Naive thymus-derived CD8-positive, alpha-beta T cell (primary cell): ENCODE measurements at regions of chr17 and their contacts with region 1.

Region 1: GRCh38 chr17:59619293-59620063 is at the start of gene CLTC:
- DNase-seq: peak; percentile 85 to 99 (median 89)
- ATAC-seq: peak; percentile 86
- H3K4me3 Mint-ChIP-seq: peak within 1 kb of the TSS; percentile 88 to 100 (median 98)
- H3K27ac Mint-ChIP-seq: peak within 1 kb of the TSS; percentile 96 to 99 (median 99)
- H3K4me1 Mint-ChIP-seq: peaks cover 17 to 59% (median 41%) of the 10 kb centered on the region in 4 donors
- H3K27me3 Mint-ChIP-seq: peaks cover 0 to 3% (median 0%) of the 10 kb centered on the region in 5 donors
- polyA plus RNA-seq, gene CLTC: 19.5 to 31.2 (median 23.7) TPM

Region 2: GRCh38 chr17:59521204-59522126 is 98.0 kb before region 1 on chr17:
- POLR2A ChIA-PET with region 1: no interaction called
- DNase-seq: peak; percentile 29 to 68 (median 50)
- ATAC-seq: peak; percentile 65 to 73
- H3K4me3 Mint-ChIP-seq: no peak overlapping the region
- H3K27ac Mint-ChIP-seq: no peak overlapping the region
- H3K4me1 Mint-ChIP-seq: peaks cover 0 to 7% (median 2%) of the 10 kb centered on the region in 4 donors
- H3K27me3 Mint-ChIP-seq: peaks cover 0 to 10% (median 7%) of the 10 kb centered on the region in 5 donors

Region 3: DNA sequence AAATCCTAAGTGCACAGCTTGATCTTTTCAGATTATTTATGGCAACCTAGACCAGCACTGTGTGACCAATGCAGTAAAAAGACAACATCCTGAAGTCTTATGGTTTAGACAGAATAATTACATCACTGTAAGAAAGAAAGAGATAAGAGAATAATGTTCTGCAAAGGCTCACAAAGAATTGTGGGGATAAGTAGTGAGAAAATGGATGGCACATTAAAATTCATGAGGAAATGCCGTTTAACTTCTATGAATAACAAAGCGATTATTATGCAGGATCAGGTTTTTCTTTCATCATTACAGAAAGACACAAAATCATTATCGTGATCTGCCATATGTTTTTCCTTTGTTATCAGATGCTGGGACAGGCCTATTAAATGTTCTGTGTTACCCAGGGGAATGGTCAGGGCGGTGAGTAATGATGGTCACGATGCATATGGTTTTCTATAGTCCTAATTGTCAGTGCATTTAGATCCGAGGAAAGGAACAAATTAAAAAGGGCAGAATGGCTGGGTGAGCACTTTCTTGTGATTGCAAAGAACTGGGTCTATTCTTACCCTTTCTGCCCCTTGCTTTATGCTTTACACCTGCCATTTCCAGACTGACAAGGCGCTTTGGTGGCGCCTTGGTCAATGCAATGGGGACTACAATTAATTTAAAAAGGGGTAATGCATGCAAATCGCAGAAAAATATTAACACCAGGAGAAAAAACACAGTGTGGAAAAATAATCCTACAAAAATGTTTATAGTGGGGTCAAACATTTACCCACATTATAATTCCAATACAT is 72.2 kb before region 1 on chr17:
- POLR2A ChIA-PET with region 1: no interaction called
- DNase-seq: no peak
- ATAC-seq: no peak
- H3K4me3 Mint-ChIP-seq: no peak overlapping the region
- H3K27ac Mint-ChIP-seq: peak overlapping the region in 1 of 10 donors; percentile 26
- H3K4me1 Mint-ChIP-seq: peaks cover 0 to 3% (median 0%) of the 10 kb centered on the region in 4 donors
- H3K27me3 Mint-ChIP-seq: peaks cover 0 to 15% (median 8%) of the 10 kb centered on the region in 5 donors

Region 4: GRCh38 chr17:59565171-59565969 is 54.1 kb before region 1 on chr17 and contains the start of gene DHX40:
- POLR2A ChIA-PET with region 1: interaction called, 29 read pairs
- DNase-seq: peak; percentile 87 to 97 (median 94)
- ATAC-seq: peak; percentile 84 to 87
- H3K4me3 Mint-ChIP-seq: peak within 1 kb of the TSS; percentile 97 to 100 (median 100)
- H3K27ac Mint-ChIP-seq: peak within 1 kb of the TSS; percentile 98 to 100 (median 100)
- H3K4me1 Mint-ChIP-seq: peaks cover 12 to 28% (median 24%) of the 10 kb centered on the region in 4 donors
- H3K27me3 Mint-ChIP-seq: no peaks in the 10 kb centered on the region
- polyA plus RNA-seq, gene DHX40: 23.6 to 25.9 (median 24.0) TPM

Region 5: GRCh38 chr17:59634632-59635541 is 15.4 kb after region 1 on chr17:
- POLR2A ChIA-PET with region 1: interaction called, 16 read pairs
- DNase-seq: no peak
- ATAC-seq: no peak
- H3K4me3 Mint-ChIP-seq: peak overlapping the region in 3 of 10 donors; percentile 18 to 38 (median 24)
- H3K27ac Mint-ChIP-seq: peak overlapping the region in 7 of 10 donors; percentile 38 to 62 (median 56)
- H3K4me1 Mint-ChIP-seq: peaks cover 18 to 77% (median 62%) of the 10 kb centered on the region in 4 donors
- H3K27me3 Mint-ChIP-seq: no peaks in the 10 kb centered on the region

Region 6: DNA sequence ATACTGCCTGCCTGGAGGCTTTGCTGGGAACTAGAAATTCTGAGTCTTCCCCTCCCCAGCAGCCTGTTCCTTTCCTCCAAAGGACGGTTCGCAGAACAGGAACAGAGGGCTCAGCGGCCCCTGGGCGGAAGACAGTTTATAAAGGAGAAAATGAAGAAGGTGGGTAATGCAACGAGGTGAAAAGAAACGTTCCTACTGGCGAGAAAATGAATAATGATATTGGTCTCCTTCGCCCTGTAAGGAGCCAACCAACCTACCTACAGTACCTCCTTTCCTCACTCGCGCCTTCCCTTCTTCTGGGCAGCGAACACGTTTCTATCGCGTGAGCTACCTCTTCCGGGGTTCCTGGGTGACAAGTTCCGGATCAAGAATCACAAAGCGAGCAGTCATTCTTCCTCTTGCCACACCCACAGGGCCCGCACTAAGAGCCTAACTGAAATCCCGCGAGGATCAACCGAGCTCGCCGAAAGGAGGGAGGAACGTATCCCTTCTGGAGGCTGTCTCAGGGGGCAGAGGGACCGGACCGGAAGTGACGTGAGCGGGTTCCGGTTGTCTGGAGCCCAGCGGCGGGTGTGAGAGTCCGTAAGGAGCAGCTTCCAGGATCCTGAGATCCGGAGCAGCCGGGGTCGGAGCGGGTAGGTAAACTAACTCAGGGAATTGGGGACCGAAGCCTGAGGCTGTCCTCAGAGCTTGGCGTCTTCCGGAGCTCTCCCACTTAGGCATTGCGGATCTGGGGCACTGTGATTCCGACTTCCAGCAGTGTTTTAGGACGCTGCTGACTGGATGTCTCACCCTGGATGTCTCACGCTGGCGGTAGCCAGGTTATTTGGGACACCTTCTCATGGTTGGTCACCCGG is 87.9 kb after region 1 on chr17 and contains the starts of genes PTRH2 and VMP1:
- POLR2A ChIA-PET with region 1: interaction called, 14 read pairs
- DNase-seq: peak; percentile 77 to 93 (median 88)
- ATAC-seq: peak; percentile 92
- H3K4me3 Mint-ChIP-seq: peak within 1 kb of the TSS; percentile 93 to 100 (median 98)
- H3K27ac Mint-ChIP-seq: peak within 1 kb of the TSS; percentile 97 to 100 (median 99)
- H3K4me1 Mint-ChIP-seq: peaks cover 30 to 75% (median 69%) of the 10 kb centered on the region in 4 donors
- H3K27me3 Mint-ChIP-seq: no peaks in the 10 kb centered on the region
- polyA plus RNA-seq, gene PTRH2: 14.4 to 19.7 (median 17.8) TPM
- polyA plus RNA-seq, gene VMP1: 39.8 to 57.1 (median 40.9) TPM